ENCODE measurements at regions of chr15 and their contacts with region 1.

Region 1: GRCh38 chr15:50145451-50145872 is 26.4 kb upstream of the ATP8B4 start:
- DNase-seq: peak; percentile 60 to 79 (median 68)
- ATAC-seq: peak; percentile 87
- H3K4me3 ChIP-seq: no peak overlapping the region
- H3K27ac ChIP-seq: no peak overlapping the region
- H3K4me1 ChIP-seq: peaks cover 0 to 5% of the 10 kb centered on the region in 2 experiments; a peak in 3 of 5 replicates
- H3K27me3 ChIP-seq: no peaks in the 10 kb centered on the region
- CTCF ChIP-seq: peak; percentile 38 to 66 (median 45); a peak in 4 of 6 replicates
- EP300 ChIP-seq: no peak
- POLR2A ChIP-seq: no peak
- RAD21 ChIP-seq: peak; percentile 84 to 88

Region 2: GRCh38 chr15:48855501-48856440 is 1289.7 kb before region 1 on chr15:
- CTCF ChIA-PET with region 1: no interaction called
- POLR2A ChIA-PET with region 1: no interaction called
- in situ Hi-C with region 1: loop called (anchors 10 kb)
- intact Hi-C with region 1: loop called (anchors 5 kb)
- DNase-seq: peak in 3 of 4 experiments; percentile 15 to 65 (median 40)
- ATAC-seq: peak; percentile 83
- H3K4me3 ChIP-seq: no peak overlapping the region
- H3K27ac ChIP-seq: no peak overlapping the region
- H3K4me1 ChIP-seq: peaks cover 0 to 31% of the 10 kb centered on the region in 2 experiments; a peak in 4 of 5 replicates
- H3K27me3 ChIP-seq: no peaks in the 10 kb centered on the region
- CTCF ChIP-seq: peak; percentile 48 to 66 (median 64); a peak in 5 of 6 replicates
- EP300 ChIP-seq: no peak
- POLR2A ChIP-seq: no peak
- RAD21 ChIP-seq: peak; percentile 58 to 80

Region 3: GRCh38 chr15:49876401-49877038 is 268.9 kb before region 1 on chr15:
- CTCF ChIA-PET with region 1: interaction called, 13 read pairs
- POLR2A ChIA-PET with region 1: no interaction called
- in situ Hi-C with region 1: no loop called
- intact Hi-C with region 1: loop called (anchors 10 kb)
- DNase-seq: peak in 2 of 4 experiments; percentile 6 to 8
- ATAC-seq: peak; percentile 40; the same call in 2 of the 3 replicates
- H3K4me3 ChIP-seq: no peak overlapping the region
- H3K27ac ChIP-seq: no peak overlapping the region
- H3K4me1 ChIP-seq: no peaks in the 10 kb centered on the region
- H3K27me3 ChIP-seq: no peaks in the 10 kb centered on the region
- CTCF ChIP-seq: peak; percentile 33 to 52 (median 38); a peak in 4 of 6 replicates
- EP300 ChIP-seq: no peak
- POLR2A ChIP-seq: no peak
- RAD21 ChIP-seq: peak; percentile 60 to 69

Region 4: DNA sequence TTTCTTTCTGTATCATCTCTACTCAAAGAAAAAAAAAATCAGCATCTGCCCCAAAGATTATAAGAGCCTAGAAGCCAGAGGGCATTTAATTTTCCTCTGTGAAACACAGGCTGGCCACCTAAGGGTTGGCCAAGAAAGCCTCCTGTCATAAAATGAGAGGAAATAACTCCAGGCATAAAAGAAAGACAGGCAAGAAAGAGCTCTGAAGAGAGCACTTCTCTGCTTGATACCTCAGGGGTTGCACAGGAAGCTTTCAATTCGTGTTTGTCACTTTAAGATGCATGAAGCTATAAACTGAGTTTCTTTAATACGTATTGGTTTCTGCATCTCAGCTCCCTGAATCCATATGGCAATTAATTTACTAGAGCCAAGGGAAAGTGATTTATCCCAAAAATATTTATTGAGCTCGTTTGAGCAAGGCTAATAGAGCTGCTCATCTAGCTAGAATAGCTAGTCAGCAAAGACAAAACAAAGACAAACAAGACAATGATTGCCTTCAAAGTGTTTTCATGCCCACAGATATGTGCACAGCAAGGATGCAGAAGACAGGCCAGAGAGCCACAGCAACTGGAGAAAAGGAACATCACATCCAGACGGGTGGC is 61.9 kb before region 1 on chr15:
- CTCF ChIA-PET with region 1: no interaction called
- POLR2A ChIA-PET with region 1: no interaction called
- in situ Hi-C with region 1: no loop called
- intact Hi-C with region 1: no loop called
- DNase-seq: no peak
- ATAC-seq: no peak
- H3K4me3 ChIP-seq: no peak overlapping the region
- H3K27ac ChIP-seq: no peak overlapping the region
- H3K4me1 ChIP-seq: peaks cover 0 to 16% of the 10 kb centered on the region in 2 experiments; a peak in 2 of 5 replicates
- H3K27me3 ChIP-seq: no peaks in the 10 kb centered on the region
- CTCF ChIP-seq: no peak
- EP300 ChIP-seq: no peak
- POLR2A ChIP-seq: no peak
- RAD21 ChIP-seq: no peak

Region 5: GRCh38 chr15:50116473-50116872 is 29.0 kb before region 1 on chr15:
- CTCF ChIA-PET with region 1: no interaction called
- POLR2A ChIA-PET with region 1: no interaction called
- in situ Hi-C with region 1: no loop called
- intact Hi-C with region 1: loop called (anchors 1 kb)
- DNase-seq: peak; percentile 30 to 76 (median 45)
- ATAC-seq: peak; percentile 93
- H3K4me3 ChIP-seq: no peak overlapping the region
- H3K27ac ChIP-seq: no peak overlapping the region
- H3K4me1 ChIP-seq: peaks cover 0 to 3% of the 10 kb centered on the region in 2 experiments; a peak in 3 of 5 replicates
- H3K27me3 ChIP-seq: no peaks in the 10 kb centered on the region
- CTCF ChIP-seq: peak; percentile 49 to 70 (median 69)
- EP300 ChIP-seq: no peak
- POLR2A ChIP-seq: no peak
- RAD21 ChIP-seq: peak; percentile 34 to 70; a peak in 3 of 4 replicates

Region 6: GRCh38 chr15:50134520-50135024 is 10.9 kb before region 1 on chr15:
- CTCF ChIA-PET with region 1: no interaction called
- POLR2A ChIA-PET with region 1: no interaction called
- in situ Hi-C with region 1: no loop called
- intact Hi-C with region 1: no loop called
- DNase-seq: peak in 2 of 4 experiments; percentile 18 to 45
- ATAC-seq: peak; percentile 61
- H3K4me3 ChIP-seq: no peak overlapping the region
- H3K27ac ChIP-seq: peak overlapping the region; percentile 24; the same call in 2 of the 3 replicates
- H3K4me1 ChIP-seq: peaks cover 0 to 22% of the 10 kb centered on the region in 2 experiments; a peak in 2 of 5 replicates
- H3K27me3 ChIP-seq: no peaks in the 10 kb centered on the region
- CTCF ChIP-seq: no peak
- EP300 ChIP-seq: 0 out of 2 replicates have a peak, but pooled peaks have one; percentile 8
- POLR2A ChIP-seq: no peak
- RAD21 ChIP-seq: no peak

Region 7: DNA sequence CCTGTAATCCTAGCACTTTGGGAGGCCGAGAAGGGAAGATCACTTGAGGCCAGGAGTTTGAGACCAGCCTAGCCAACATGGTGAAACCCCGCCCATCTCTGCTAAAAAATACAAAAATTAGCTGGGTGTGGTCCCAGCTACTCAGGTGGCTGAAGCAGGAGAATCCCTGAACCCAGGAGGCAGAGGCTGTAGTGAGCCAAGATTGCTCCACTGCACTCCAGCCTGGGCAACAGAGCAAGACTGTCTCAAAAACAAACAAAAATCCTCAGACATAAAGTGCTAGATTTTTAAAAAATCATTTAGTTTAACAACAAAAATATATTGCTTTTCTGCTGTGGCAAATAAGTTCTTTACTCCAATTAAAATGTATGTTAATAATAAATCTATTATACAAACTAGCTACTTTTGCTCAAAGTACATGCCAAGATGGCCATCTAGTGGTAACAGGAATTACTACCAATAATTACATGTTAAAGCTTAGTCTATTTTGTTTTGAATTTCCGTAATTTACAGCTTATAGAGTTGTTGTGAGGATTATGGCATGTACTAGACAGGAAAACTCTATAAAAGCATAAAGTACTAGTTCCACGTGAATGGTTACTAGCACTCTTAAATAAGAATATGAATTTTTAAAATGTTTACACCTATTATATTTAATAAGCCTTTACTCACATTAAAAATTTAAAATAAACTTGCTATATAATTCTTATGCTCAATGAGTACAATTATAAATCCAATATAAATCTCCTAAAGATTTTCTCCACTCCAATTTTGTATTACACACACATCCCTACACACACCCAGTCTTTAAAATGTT is 170.6 kb after region 1 on chr15:
- CTCF ChIA-PET with region 1: interaction called, 16 read pairs
- POLR2A ChIA-PET with region 1: interaction called, 3 read pairs
- in situ Hi-C with region 1: loop called (anchors 5 kb)
- intact Hi-C with region 1: loop called (anchors 1 kb)
- DNase-seq: peak in 3 of 4 experiments; percentile 16 to 59 (median 19)
- ATAC-seq: peak; percentile 80
- H3K4me3 ChIP-seq: no peak overlapping the region
- H3K27ac ChIP-seq: no peak overlapping the region
- H3K4me1 ChIP-seq: no peaks in the 10 kb centered on the region
- H3K27me3 ChIP-seq: no peaks in the 10 kb centered on the region
- CTCF ChIP-seq: peak; percentile 49 to 78 (median 59); a peak in 5 of 6 replicates
- EP300 ChIP-seq: no peak
- POLR2A ChIP-seq: no peak
- RAD21 ChIP-seq: peak; percentile 91 to 92